Activated CD4-positive, alpha-beta memory T cell treated with anti-CD3 and anti-CD28 coated beads for 36 hours (primary cell): ENCODE measurements at regions of chr17 and their contacts with region 1.

Region 1: DNA sequence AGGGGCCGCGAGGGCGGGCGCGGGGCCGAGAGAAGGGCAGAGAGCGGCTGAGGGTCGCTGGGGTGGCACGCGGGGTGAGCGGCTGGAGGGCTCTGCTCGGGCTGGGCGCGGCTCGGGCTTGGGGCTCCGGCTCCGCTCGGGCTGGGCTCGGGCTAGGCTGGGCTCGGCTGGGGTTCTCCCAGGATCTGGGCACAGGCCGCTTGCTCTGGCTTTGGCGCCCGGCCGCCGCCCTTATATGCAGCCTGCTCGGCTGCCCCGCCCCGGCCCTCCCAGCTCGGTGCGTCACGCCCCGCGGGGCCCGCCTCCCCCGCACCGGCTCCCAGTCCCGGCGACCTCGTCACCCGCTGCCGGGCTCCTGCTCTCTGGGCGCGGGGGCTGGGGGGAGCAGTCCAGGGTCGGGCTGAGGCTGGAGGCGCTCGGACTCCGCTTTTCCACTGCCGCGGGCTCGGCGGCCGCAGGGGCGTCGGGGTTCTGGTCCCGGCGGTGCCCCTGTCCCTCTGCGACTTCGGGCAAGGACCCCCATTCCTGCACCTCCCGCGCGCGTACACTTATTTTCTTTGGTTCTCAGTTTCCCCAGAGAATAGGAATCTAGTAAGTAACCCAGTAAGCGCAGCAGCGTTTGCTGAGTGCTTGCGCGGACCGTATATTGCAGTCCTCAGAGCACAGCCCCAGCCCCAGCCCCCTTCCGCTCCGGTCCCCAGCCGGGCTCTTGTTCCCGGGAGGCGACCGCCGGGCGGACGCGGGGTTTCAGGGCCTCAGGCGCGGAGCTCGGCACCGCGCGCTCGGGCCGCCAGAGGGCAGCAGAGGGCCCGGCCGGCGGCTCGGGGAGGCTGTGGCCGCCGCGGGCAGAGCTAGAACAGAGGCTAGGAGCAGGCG is at the start of gene RASD1:
- DNase-seq: peak; percentile 88
- H3K4me3 Mint-ChIP-seq: peak within 1 kb of the TSS; percentile 62
- H3K27ac Mint-ChIP-seq: no peak within 1 kb of the TSS
- H3K4me1 Mint-ChIP-seq: peaks cover 16% of the 10 kb centered on the region
- H3K27me3 Mint-ChIP-seq: peaks cover 7% of the 10 kb centered on the region
- total RNA-seq, gene RASD1: 0.27 to 0.33 TPM

Region 2: DNA sequence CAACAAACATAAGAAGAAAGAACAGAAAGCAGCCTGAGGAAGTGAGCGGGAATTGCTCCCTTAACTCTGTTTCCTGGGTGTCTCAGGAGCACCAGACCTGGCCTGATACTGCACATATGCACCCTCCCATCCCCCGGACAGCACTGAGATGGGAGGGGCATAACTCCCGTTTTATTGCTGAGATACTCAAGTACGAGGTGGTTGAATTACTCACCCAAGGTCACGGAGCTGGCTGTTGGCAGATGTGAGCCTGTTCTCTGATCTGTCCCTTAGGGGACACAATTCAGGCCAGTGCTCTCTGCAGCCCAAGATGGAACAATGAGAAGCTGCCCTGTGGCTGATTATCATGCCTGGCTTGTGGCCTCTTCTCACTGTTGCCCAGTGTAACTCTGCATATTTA is 28.7 kb before region 1 on chr17:
- CTCF ChIA-PET with region 1: interaction called, 13 read pairs
- POLR2A ChIA-PET with region 1: interaction called, 3 read pairs
- intact Hi-C with region 1: no loop called
- DNase-seq: no peak
- H3K4me3 Mint-ChIP-seq: no peak overlapping the region
- H3K27ac Mint-ChIP-seq: no peak overlapping the region
- H3K4me1 Mint-ChIP-seq: peaks cover 5% of the 10 kb centered on the region
- H3K27me3 Mint-ChIP-seq: peaks cover 16% of the 10 kb centered on the region

Region 3: DNA sequence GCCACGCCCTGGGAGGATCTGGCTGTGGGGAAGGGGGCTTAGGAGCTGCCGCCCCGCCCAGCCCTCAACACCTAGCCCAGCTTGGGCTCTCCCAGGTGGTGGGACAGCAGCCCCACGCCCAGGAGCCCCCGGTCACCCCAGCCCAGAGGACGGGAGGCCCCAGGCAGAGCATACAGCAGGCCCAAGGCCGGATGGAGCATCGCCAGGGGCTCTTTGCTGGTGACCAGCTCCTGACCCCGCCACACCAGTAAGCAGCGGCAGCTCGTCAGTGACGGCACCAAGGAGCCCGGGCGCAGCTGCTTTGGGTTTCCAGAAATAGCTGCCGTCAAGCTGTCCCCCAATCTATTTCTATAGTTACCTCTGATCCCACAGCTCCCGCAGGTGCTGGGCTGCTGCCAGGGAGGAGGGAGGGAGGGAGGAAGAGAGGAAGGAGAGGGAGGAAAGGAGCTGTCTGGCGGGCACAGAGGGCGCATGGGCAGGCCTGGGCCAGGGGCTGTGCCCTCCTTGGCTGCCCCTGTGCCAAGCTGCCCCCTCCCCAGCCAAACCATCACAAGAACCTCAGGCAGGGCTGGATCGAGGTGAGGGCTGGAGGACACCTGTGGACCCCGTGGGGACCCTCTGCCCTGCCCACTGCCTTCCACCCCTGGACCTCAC is 10.5 kb after region 1 on chr17:
- CTCF ChIA-PET with region 1: interaction called, 15 read pairs
- POLR2A ChIA-PET with region 1: no interaction called
- intact Hi-C with region 1: no loop called
- DNase-seq: no peak
- H3K4me3 Mint-ChIP-seq: no peak overlapping the region
- H3K27ac Mint-ChIP-seq: no peak overlapping the region
- H3K4me1 Mint-ChIP-seq: no peaks in the 10 kb centered on the region
- H3K27me3 Mint-ChIP-seq: no peaks in the 10 kb centered on the region

Region 4: GRCh38 chr17:17568749-17569195 is 72.3 kb after region 1 on chr17:
- CTCF ChIA-PET with region 1: interaction called, 30 read pairs
- POLR2A ChIA-PET with region 1: no interaction called
- intact Hi-C with region 1: loop called (anchors 5 kb)
- DNase-seq: peak; percentile 72
- H3K4me3 Mint-ChIP-seq: no peak overlapping the region
- H3K27ac Mint-ChIP-seq: no peak overlapping the region
- H3K4me1 Mint-ChIP-seq: no peaks in the 10 kb centered on the region
- H3K27me3 Mint-ChIP-seq: no peaks in the 10 kb centered on the region

Region 5: GRCh38 chr17:17636272-17636885 is 140.0 kb after region 1 on chr17:
- CTCF ChIA-PET with region 1: interaction called, 87 read pairs
- POLR2A ChIA-PET with region 1: interaction called, 3 read pairs
- intact Hi-C with region 1: no loop called
- DNase-seq: no peak
- H3K4me3 Mint-ChIP-seq: no peak overlapping the region
- H3K27ac Mint-ChIP-seq: no peak overlapping the region
- H3K4me1 Mint-ChIP-seq: no peaks in the 10 kb centered on the region
- H3K27me3 Mint-ChIP-seq: no peaks in the 10 kb centered on the region